CD4-positive, alpha-beta T cell (primary cell): ENCODE measurements at regions of chr2 and their contacts with region 1.

Region 1: DNA sequence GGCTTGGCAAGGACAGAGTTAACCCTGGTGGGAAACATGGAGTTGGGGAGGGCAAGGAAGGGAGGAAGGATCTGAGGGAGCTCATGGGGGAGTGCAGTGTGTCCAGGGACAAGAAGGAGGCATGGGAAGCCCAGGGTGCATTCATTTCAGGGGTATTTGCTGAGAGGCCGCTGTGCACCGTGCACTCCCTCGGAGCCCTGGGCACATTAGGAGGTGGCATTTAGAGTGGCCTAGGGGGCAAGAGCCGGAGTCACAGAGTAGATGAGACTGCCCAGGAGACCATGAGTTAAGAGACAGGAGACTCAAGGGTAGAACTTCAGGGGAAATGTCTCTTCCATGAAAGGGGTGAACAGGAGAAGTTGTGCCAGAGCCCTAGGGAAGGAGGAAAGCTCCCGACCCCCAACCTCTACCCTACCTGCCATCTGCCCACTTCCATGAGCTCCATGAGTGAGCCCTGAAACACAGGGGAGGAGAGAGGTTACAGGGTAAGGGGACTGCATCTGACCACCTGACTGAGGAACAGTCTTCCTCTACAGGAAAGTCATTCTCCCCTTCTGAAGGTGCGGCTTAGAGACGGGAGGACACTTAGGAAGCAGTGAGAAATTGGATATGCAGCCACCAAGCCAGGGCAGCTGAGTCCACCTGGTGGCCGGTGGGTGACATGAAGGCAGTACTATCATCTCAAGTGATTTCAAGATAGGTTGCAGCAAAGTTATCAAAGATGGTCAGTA is 58.5 kb upstream of the COPS8 start:
- DNase-seq: peak; percentile 11 to 64 (median 36)
- ATAC-seq: peak; percentile 61
- H3K4me3 ChIP-seq: no peak overlapping the region
- H3K4me3 Mint-ChIP-seq: no peak overlapping the region
- H3K27ac ChIP-seq: no peak overlapping the region
- H3K27ac Mint-ChIP-seq: no peak overlapping the region
- H3K4me1 ChIP-seq: no peaks in the 10 kb centered on the region
- H3K4me1 Mint-ChIP-seq: no peaks in the 10 kb centered on the region
- H3K27me3 ChIP-seq: no peaks in the 10 kb centered on the region
- H3K27me3 Mint-ChIP-seq: no peaks in the 10 kb centered on the region
- CTCF ChIP-seq: peak; percentile 61

Region 2: DNA sequence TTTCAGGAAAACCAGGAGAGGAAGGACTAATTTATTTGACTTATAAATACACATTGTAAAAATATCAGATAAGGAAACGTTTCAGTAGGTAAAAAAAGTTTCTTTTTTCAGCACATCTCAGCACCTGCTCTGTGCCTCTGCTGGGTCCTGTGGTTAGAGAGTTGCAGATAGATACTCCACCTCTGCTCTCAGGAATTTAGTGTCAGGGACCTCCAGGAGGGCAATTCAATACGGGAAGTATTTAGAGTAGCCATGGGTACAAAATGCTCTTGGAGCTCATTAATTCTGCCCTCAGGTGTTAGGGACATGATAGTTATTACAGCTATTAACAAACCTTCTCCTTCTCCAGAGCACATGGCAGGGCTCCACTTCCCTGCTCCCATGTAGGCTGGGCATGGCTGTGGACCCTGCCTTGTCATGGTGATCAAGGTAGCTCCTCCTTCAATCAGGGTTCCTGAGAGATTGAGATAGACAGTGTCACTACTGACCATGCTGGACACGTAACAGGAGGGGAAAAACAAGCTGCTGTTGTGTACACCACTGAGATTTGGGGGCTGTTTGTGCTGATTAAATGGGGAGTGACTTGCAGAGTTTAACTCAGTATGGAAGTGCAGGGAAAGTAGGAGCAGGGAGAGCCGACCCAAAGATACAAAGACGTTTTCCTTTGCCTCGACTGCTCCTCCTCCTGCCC is 127.1 kb before region 1 on chr2:
- CTCF ChIA-PET with region 1: no interaction called
- POLR2A ChIA-PET with region 1: no interaction called
- intact Hi-C with region 1: loop called in 1 of 2 experiments (anchors 10 kb)
- DNase-seq: no peak
- ATAC-seq: no peak
- H3K4me3 ChIP-seq: no peak overlapping the region
- H3K4me3 Mint-ChIP-seq: no peak overlapping the region
- H3K27ac ChIP-seq: no peak overlapping the region
- H3K27ac Mint-ChIP-seq: no peak overlapping the region
- H3K4me1 ChIP-seq: no peaks in the 10 kb centered on the region
- H3K4me1 Mint-ChIP-seq: no peaks in the 10 kb centered on the region
- H3K27me3 ChIP-seq: peaks cover 0 to 8% of the 10 kb centered on the region in 2 experiments
- H3K27me3 Mint-ChIP-seq: peaks cover 15% of the 10 kb centered on the region
- CTCF ChIP-seq: no peak

Region 3: GRCh38 chr2:237181844-237182243 is 154.7 kb after region 1 on chr2:
- CTCF ChIA-PET with region 1: no interaction called
- POLR2A ChIA-PET with region 1: no interaction called
- intact Hi-C with region 1: no loop called
- DNase-seq: no peak
- ATAC-seq: no peak
- H3K4me3 ChIP-seq: no peak overlapping the region
- H3K4me3 Mint-ChIP-seq: no peak overlapping the region
- H3K27ac ChIP-seq: no peak overlapping the region
- H3K27ac Mint-ChIP-seq: no peak overlapping the region
- H3K4me1 ChIP-seq: no peaks in the 10 kb centered on the region
- H3K4me1 Mint-ChIP-seq: no peaks in the 10 kb centered on the region
- H3K27me3 ChIP-seq: peaks cover 0 to 8% of the 10 kb centered on the region in 2 experiments
- H3K27me3 Mint-ChIP-seq: peaks cover 42% of the 10 kb centered on the region
- CTCF ChIP-seq: no peak